Activated naive CD4-positive, alpha-beta T cell treated with anti-CD3 and anti-CD28 coated beads for 36 hours (primary cell): ENCODE measurements at regions of chr17 and their contacts with region 1.

Region 1: DNA sequence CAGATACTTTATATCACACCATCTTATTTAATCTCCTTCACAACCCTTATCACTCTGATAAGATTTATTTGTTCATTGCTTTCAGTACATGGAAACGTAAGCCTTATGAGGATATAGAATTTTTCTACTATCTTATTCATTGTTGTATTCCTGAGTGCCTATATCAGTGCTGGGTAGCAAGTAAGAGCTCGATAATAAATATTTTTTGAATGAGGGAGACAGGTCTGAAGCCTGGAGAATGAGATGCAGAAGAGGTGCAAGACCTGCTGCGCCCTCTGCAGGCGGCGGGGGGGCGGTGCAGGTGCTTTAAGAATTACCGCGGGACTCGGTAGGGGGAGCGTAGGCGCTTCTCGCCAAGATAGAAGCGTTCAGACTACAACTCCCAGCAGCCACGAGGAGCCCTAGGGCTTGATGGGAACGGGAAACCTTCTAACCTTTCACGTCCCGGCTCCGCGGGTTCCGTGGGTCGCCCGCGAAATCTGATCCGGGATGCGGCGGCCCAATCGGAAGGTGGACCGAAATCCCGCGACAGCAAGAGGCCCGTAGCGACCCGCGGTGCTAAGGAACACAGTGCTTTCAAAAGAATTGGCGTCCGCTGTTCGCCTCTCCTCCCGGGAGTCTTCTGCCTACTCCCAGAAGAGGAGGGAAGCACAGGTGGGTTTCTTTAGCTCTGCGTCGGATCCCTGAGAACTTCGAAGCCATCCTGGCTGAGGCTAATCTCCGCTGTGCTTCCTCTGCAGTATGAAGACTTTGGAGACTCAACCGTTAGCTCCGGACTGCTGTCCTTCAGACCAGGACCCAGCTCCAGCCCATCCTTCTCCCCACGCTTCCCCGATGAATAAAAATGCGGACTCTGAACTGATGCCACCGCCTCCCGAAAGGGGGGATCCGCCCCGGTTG is at the start of gene WRAP53:
- DNase-seq: peak; percentile 98
- H3K4me3 Mint-ChIP-seq: peak within 1 kb of the TSS; percentile 89
- H3K27ac Mint-ChIP-seq: peak within 1 kb of the TSS; percentile 99
- H3K4me1 Mint-ChIP-seq: peaks cover 33% of the 10 kb centered on the region
- H3K27me3 Mint-ChIP-seq: no peaks in the 10 kb centered on the region
- total RNA-seq, gene WRAP53: 13.7 to 14.7 TPM

Region 2: DNA sequence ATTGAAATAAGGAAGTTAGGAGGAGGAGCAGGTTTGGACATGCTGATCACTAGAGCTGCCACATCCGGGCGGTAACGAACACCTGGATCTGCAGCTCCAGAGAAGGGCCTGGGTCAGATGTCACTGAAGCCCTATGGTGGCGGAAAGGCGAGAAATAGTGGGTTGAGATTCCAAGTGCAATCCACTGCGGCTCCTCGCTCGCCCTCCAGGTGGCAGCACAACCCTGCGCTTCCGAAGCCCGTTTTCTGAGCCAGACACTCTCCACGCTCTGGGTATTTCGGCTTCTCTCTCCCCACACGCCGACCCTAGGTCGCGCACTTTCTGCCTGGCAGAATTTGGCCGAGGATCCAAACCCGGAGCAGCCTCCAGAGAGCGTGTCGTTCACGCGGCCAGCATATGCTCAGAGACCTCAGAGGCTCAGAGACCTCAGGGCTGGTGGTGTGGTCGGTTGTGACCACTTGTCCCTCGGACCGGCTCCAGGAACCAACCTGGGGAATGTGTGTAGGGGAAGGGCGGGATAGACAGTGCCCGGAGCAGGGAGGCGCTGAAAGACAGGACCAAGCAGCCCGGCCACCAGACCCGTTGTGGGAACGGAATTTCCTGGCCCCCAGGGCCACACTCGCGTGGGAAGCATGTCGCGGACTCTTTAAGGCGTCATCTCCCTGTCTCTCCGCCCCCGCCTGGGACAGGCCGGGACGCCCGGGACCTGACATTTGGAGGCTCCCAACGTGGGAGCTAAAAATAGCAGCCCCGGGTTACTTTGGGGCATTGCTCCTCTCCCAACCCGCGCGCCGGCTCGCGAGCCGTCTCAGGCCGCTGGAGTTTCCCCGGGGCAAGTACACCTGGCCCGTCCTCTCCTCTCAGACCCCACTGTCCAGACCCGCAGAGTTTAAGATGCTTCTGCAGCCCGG is 407.4 kb before region 1 on chr17:
- CTCF ChIA-PET with region 1: no interaction called
- intact Hi-C with region 1: loop called (anchors 2 kb)
- DNase-seq: peak; percentile 91
- H3K4me3 Mint-ChIP-seq: peak overlapping the region; percentile 74
- H3K27ac Mint-ChIP-seq: no peak overlapping the region
- H3K4me1 Mint-ChIP-seq: peaks cover 20% of the 10 kb centered on the region
- H3K27me3 Mint-ChIP-seq: peaks cover 17% of the 10 kb centered on the region

Region 3: DNA sequence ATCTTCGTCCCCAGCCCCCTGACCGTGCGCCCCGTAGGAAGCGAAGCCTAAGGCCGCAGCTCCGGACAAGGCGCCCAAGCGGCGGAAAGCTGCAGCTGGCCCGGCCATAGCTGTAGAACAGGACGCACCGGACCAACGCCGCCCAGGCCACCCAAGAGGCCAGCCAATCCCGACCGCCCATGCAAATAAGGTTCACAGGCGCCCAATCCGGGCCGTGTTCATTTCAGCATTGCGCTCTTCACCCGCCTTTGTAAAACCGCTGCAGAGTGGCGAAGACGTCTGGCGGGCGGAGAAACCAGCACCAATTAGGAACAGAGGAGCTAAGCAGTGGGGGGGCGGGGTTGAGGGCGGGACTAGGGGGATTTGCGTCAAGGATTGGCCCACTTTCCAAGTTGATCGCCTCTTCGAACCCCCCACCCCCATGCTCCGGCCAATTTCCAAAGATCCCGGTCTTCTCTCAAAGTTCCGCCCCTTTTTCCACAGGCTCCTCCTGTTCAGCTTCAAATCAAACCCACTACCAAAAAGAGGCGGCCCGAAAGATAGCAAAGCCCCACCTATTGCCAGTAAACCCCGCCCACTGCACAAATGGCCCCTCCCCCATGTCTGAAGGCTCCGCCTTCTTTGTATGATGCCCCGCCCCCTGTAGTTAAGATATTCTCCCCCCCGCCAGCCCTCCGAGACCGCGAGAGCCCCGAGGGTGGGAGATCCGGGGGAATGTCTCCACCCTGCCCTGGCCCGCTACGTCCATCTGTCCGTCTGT is 284.0 kb before region 1 on chr17 and contains the start of gene TMEM256:
- CTCF ChIA-PET with region 1: no interaction called
- intact Hi-C with region 1: loop called (anchors 1 kb)
- DNase-seq: peak; percentile 99
- H3K4me3 Mint-ChIP-seq: peak within 1 kb of the TSS; percentile 93
- H3K27ac Mint-ChIP-seq: peak within 1 kb of the TSS; percentile 93
- H3K4me1 Mint-ChIP-seq: peaks cover 19% of the 10 kb centered on the region
- H3K27me3 Mint-ChIP-seq: peaks cover 2% of the 10 kb centered on the region
- total RNA-seq, gene TMEM256: 65.6 to 66.3 TPM

Region 4: DNA sequence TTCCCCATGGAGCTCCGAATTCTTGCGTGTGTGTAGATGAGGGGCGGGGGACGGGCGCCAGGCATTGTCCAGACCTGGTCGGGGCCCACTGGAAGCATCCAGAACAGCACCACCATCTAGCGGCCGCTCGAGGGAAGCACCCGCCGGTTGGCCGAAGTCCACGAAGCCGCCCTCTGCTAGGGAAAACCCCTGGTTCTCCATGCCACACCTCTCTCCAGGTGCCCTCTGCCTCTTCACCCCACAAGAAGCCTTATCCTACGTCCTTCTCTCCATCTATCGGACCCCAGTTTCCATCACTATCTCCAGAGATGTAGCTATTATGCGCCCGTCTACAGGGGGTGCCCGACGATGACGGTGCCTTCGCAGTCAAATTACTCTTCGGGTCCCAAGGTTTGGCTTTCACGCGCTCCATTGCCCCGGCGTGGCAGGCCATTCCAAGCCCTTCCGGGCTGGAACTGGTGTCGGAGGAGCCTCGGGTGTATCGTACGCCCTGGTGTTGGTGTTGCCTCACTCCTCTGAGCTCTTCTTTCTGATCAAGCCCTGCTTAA is 127.1 kb before region 1 on chr17:
- CTCF ChIA-PET with region 1: interaction called, 10 read pairs
- intact Hi-C with region 1: no loop called
- DNase-seq: peak; percentile 89
- H3K4me3 Mint-ChIP-seq: peak overlapping the region; percentile 87
- H3K27ac Mint-ChIP-seq: peak overlapping the region; percentile 84
- H3K4me1 Mint-ChIP-seq: peaks cover 57% of the 10 kb centered on the region
- H3K27me3 Mint-ChIP-seq: no peaks in the 10 kb centered on the region

Region 5: DNA sequence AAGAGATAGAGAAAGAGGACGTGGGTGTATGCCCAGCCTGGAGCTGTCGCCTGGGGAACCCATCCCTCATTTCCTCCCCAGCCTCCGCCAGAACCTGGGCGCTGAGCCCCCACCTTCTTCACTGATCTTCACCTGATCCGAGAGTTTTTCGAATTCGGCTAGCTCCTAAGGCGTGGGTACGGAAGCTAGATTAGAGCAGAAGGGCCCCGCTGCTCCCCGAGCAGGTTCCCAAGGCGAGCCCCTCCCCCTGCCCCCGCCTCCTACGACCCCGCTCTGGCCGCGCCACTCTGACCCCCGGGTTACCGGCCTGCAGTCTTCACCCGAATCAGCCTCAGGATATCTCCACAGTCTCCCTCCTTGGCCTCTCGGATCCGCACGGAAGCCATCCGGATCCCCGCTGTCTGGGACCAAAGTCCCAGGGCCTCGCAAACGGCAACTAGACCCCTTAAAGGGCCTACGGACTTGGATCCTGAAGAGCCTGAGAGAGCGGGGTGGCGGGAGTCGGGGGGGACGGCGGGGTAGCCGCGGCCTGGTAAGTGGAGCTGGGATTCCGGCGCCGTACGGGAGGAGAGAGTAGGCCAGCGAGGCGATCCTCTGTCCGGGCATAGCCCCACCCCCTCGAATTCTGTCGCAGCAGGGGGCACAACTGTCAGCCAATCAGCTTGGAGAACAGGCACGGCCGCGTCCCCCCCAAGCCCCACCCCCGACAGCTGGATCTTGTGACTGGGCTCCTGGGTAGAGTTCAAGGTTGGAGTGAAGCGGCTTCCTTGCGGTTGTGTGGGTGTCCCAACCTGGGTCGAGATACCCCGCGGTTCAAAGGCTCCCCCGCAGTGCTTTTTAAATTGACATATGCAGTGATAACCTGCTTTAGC is 60.7 kb before region 1 on chr17 and contains the start of gene SAT2:
- CTCF ChIA-PET with region 1: interaction called, 56 read pairs
- intact Hi-C with region 1: loop called (anchors 1 kb)
- DNase-seq: peak; percentile 86
- H3K4me3 Mint-ChIP-seq: peak within 1 kb of the TSS; percentile 88
- H3K27ac Mint-ChIP-seq: peak within 1 kb of the TSS; percentile 30
- H3K4me1 Mint-ChIP-seq: peaks cover 7% of the 10 kb centered on the region
- H3K27me3 Mint-ChIP-seq: no peaks in the 10 kb centered on the region
- total RNA-seq, gene SAT2: 14.3 to 16.9 TPM

Region 6: GRCh38 chr17:7856883-7857723 is 168.9 kb after region 1 on chr17 and contains the start of gene NAA38:
- CTCF ChIA-PET with region 1: interaction called, 3 read pairs
- intact Hi-C with region 1: loop called (anchors 1 kb)
- DNase-seq: peak; percentile 98
- H3K4me3 Mint-ChIP-seq: no peak within 1 kb of the TSS
- H3K27ac Mint-ChIP-seq: no peak within 1 kb of the TSS
- H3K4me1 Mint-ChIP-seq: peaks cover 22% of the 10 kb centered on the region
- H3K27me3 Mint-ChIP-seq: no peaks in the 10 kb centered on the region
- total RNA-seq, gene NAA38: 75.0 to 75.3 TPM